A549 (cell line): ENCODE measurements at regions of chr10 and their contacts with region 1.

Region 1: GRCh38 chr10:122298598-122299301 is 27.7 kb downstream of the BTBD16 start:
- DNase-seq: peak; percentile 80 to 89
- ATAC-seq: peak; percentile 82 to 93
- H3K4me3 ChIP-seq: peak overlapping the region; percentile 32; the same call in 2 of the 3 replicates
- H3K27ac ChIP-seq: peak overlapping the region; percentile 88 to 92
- H3K4me1 ChIP-seq: peaks cover 23% of the 10 kb centered on the region
- CTCF ChIP-seq: peak; percentile 96
- EP300 ChIP-seq: no peak
- POLR2A ChIP-seq: no peak
- RAD21 ChIP-seq: peak; percentile 99

Region 2: GRCh38 chr10:122232769-122233168 is 66.0 kb before region 1 on chr10:
- CTCF ChIA-PET with region 1: no interaction called
- POLR2A ChIA-PET with region 1: no interaction called
- DNase-seq: no peak
- ATAC-seq: no peak
- H3K4me3 ChIP-seq: no peak overlapping the region
- H3K27ac ChIP-seq: no peak overlapping the region
- H3K4me1 ChIP-seq: no peaks in the 10 kb centered on the region
- CTCF ChIP-seq: no peak
- EP300 ChIP-seq: no peak
- POLR2A ChIP-seq: no peak
- RAD21 ChIP-seq: no peak

Region 3: GRCh38 chr10:122286867-122287266 is 11.9 kb before region 1 on chr10:
- CTCF ChIA-PET with region 1: interaction called, 34 read pairs
- POLR2A ChIA-PET with region 1: no interaction called
- DNase-seq: no peak
- ATAC-seq: peak; percentile 61 to 66
- H3K4me3 ChIP-seq: no peak overlapping the region
- H3K27ac ChIP-seq: no peak overlapping the region
- H3K4me1 ChIP-seq: peaks cover 6% of the 10 kb centered on the region; the same call in 1 of the 3 replicates
- CTCF ChIP-seq: no peak
- EP300 ChIP-seq: no peak
- POLR2A ChIP-seq: no peak
- RAD21 ChIP-seq: no peak

Region 4: DNA sequence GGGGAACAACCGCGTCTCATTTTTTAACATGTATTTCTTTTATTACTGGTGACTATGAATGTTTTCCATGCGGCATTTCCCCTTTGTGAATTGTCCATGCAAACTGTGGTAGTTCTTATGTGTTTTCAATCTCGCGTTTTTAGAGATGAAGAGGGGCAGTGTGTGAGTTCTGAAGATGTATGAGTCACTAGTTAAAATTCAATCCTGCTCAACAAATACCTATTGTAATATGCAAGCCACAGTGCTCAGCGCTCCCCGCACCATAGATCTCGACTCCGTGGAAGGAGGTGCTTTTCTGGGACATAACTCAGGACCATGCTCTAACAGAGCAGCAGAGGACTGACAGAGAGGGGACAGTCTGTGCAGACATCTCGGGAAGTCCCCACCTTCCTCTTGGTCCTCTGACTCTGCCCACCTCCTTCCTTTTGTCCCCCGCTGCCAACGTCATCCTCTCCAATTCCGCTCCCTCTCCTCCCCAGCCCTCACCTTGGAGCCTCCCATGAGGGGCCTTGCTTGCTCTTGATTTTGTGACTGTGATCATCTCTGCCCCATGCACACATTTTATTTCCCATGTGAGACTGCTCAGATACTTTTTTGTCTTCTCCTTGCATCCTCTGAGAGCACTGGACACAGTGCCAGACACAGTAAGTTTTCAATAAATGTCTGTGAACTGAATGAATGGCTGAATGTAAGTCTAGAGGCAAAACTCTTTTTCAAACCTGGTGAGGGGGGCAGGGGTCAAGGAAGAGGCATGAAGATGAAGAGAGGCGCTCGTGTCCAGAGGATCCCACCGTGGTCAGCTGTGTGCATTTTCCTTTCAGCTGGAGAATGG is 33.1 kb after region 1 on chr10:
- CTCF ChIA-PET with region 1: interaction called, 10 read pairs
- POLR2A ChIA-PET with region 1: no interaction called
- DNase-seq: peak; percentile 52 to 68
- ATAC-seq: peak; percentile 88 to 91
- H3K4me3 ChIP-seq: no peak overlapping the region
- H3K27ac ChIP-seq: peak overlapping the region; percentile 69 to 85
- H3K4me1 ChIP-seq: peaks cover 26% of the 10 kb centered on the region
- CTCF ChIP-seq: no peak
- EP300 ChIP-seq: no peak
- POLR2A ChIP-seq: peak; percentile 31; the same call in 1 of the 2 replicates
- RAD21 ChIP-seq: no peak

Region 5: GRCh38 chr10:122392835-122393234 is 94.1 kb after region 1 on chr10:
- CTCF ChIA-PET with region 1: interaction called, 14 read pairs
- POLR2A ChIA-PET with region 1: no interaction called
- DNase-seq: no peak
- ATAC-seq: no peak
- H3K4me3 ChIP-seq: no peak overlapping the region
- H3K27ac ChIP-seq: no peak overlapping the region
- H3K4me1 ChIP-seq: peaks cover 8% of the 10 kb centered on the region; the same call in 2 of the 3 replicates
- CTCF ChIP-seq: no peak
- EP300 ChIP-seq: no peak
- POLR2A ChIP-seq: no peak
- RAD21 ChIP-seq: no peak

Region 6: DNA sequence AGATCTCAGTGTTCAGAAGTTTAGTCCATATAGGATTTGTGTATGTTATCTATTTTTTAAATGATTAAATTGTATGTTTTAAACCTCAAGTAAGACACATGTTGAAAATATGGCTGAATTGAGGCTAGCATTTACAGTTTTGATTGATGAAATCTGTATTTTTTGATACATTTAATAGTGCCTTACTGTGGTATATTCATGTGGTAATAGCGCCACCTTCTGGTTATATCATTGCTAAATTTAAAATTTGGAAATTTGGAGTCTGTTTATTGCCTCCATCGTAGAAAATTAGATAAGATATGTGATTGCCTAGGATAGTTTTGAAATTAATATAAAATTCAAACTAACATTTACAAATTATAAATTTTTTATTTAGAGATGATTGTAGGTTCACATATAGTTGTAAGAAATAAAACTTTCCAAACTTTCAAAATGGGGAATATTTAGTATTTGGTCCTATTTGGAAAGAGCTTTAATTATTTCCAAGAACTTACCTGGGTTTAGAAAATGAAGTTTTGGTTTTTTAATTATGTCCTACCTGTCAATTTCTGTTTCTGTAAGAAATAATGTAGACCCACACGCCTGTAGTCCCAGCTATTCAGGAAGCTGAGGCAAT is 136.6 kb after region 1 on chr10:
- CTCF ChIA-PET with region 1: interaction called, 145 read pairs
- POLR2A ChIA-PET with region 1: no interaction called
- DNase-seq: peak; percentile 36 to 48
- ATAC-seq: peak; percentile 8 to 72; a peak in 4 of 6 replicates
- H3K4me3 ChIP-seq: no peak overlapping the region
- H3K27ac ChIP-seq: no peak overlapping the region
- H3K4me1 ChIP-seq: no peaks in the 10 kb centered on the region
- CTCF ChIP-seq: peak; percentile 87
- EP300 ChIP-seq: no peak
- POLR2A ChIP-seq: no peak
- RAD21 ChIP-seq: peak; percentile 90 to 94

Region 7: DNA sequence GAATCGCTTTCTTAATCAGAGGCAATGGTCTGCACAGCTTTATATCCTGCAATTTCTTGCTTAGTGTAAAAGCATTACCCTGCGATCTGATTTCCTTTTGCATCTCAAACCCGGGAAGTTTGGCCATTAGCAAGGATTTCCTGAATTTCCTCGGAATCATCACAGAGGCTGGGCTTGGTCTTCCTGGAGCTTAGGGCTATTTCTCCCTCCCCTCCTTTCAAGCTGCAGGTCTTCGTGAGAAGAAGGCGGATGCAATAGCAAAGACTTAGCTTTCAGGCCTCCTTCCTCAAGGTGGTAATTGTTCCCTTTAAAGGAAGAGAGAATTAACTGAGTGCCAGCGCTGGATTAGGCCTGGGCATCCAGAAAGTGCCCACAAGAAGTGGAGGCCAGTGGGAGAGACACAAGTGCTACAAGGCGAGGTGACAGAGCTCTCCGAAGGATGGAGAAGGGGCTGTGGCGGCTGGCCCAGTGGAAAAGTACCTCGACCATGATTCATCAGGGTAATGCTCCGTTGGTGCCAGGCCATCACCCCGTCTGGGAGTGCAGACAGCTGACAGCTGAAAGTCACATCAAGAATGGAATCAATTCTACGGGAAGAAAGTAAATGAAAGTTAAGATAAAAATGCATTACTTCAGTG is 151.7 kb after region 1 on chr10:
- CTCF ChIA-PET with region 1: interaction called, 10 read pairs
- POLR2A ChIA-PET with region 1: no interaction called
- DNase-seq: no peak
- ATAC-seq: no peak
- H3K4me3 ChIP-seq: no peak overlapping the region
- H3K27ac ChIP-seq: 0 out of 6 replicates have a peak overlapping the region, but pooled peaks of 1 of the 2 experiments have one; percentile 8
- H3K4me1 ChIP-seq: peaks cover 11% of the 10 kb centered on the region
- CTCF ChIP-seq: no peak
- EP300 ChIP-seq: no peak
- POLR2A ChIP-seq: no peak
- RAD21 ChIP-seq: no peak

Region 8: DNA sequence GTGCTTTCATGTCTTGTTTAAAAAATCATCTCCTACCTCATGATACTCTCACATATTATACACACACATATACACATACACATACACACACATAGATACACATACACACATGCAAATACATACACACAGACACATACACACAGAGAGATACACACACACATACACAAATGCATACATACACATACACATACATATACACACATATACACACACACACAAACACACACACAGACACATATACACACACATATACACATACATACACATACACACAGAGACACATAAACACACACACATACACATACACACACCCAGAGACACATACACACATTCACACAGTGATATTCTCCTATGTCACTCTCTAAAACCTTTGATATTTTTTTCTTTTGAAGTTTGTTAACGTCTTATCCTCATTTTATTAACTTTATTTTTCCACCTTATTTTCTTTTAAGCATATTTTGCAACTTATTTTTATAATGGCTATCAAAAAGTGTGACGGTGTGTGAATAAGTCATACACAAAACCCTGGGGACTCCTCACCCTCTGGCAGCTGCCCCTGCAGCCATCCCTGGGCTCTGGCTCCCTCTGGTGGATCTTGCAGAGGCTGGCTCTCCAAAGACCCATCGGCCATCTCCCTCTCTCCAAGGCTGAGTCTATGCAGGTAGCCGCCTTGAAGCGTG is 404.8 kb after region 1 on chr10:
- CTCF ChIA-PET with region 1: interaction called, 16 read pairs
- POLR2A ChIA-PET with region 1: no interaction called
- DNase-seq: peak; percentile 62 to 84
- ATAC-seq: peak; percentile 99 to 100
- H3K4me3 ChIP-seq: no peak overlapping the region
- H3K27ac ChIP-seq: no peak overlapping the region
- H3K4me1 ChIP-seq: no peaks in the 10 kb centered on the region
- CTCF ChIP-seq: peak; percentile 85
- EP300 ChIP-seq: no peak
- POLR2A ChIP-seq: no peak
- RAD21 ChIP-seq: peak; percentile 94 to 97